Left ventricle myocardium inferior (tissue), 1 donor: ENCODE measurements at regions of chr4 and their contacts with region 1.

Region 1: GRCh38 chr4:185039508-185040273 is 21.4 kb downstream of the HELT start:
- DNase-seq: no peak
- H3K4me3 ChIP-seq: peak overlapping the region; percentile 2
- H3K27ac ChIP-seq: no peak overlapping the region
- H3K4me1 ChIP-seq: peaks cover 5% of the 10 kb centered on the region
- H3K27me3 ChIP-seq: peaks cover 11% of the 10 kb centered on the region
- CTCF ChIP-seq: peak; percentile 85

Region 2: DNA sequence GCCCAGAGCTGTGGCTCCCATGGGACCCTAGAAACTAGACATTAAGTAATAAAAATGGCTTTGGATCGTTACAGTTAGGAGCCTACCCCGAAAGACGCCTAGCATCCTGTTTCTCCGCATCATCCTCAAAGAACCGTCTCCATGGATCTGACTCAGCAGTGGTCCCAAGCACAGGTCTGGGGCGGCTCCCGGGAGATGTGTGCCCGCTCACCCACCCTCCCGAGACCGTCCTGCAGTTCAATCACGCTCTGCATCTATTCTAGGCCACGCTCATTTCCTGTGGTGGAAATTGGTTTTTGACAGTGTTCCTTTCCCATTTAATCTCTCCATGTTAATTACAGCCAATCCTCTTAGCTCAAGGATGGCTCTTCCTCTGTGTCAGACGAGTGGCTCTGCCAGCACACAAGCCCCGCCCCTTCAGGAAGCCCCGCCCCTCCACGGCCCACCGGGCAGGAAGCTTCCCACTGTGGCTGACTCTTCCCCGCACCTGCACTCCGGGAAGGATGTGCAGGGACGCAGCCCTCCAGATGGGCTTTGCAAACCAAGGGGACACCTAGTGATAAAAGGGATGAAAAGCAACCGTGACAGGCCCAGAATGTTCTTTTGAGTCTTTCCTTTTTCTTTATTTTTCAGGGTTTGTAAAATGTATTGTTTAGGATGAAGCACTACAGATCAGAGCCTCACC is 55.9 kb before region 1 on chr4:
- intact Hi-C with region 1: no loop called
- DNase-seq: peak; percentile 67
- H3K4me3 ChIP-seq: no peak overlapping the region
- H3K27ac ChIP-seq: peak overlapping the region; percentile 10
- H3K4me1 ChIP-seq: peaks cover 22% of the 10 kb centered on the region
- H3K27me3 ChIP-seq: no peaks in the 10 kb centered on the region
- CTCF ChIP-seq: peak; percentile 63

Region 3: GRCh38 chr4:185093589-185093988 is 53.9 kb after region 1 on chr4:
- intact Hi-C with region 1: loop called (anchors 5 kb)
- DNase-seq: no peak
- H3K4me3 ChIP-seq: no peak overlapping the region
- H3K27ac ChIP-seq: no peak overlapping the region
- H3K4me1 ChIP-seq: no peaks in the 10 kb centered on the region
- H3K27me3 ChIP-seq: no peaks in the 10 kb centered on the region
- CTCF ChIP-seq: no peak

Region 4: GRCh38 chr4:185115827-185116232 is 76.1 kb after region 1 on chr4:
- intact Hi-C with region 1: no loop called
- DNase-seq: peak; percentile 69
- H3K4me3 ChIP-seq: peak overlapping the region; percentile 12
- H3K27ac ChIP-seq: peak overlapping the region; percentile 85
- H3K4me1 ChIP-seq: peaks cover 78% of the 10 kb centered on the region
- H3K27me3 ChIP-seq: no peaks in the 10 kb centered on the region
- CTCF ChIP-seq: no peak

Region 5: GRCh38 chr4:185134307-185134869 is 94.7 kb after region 1 on chr4:
- intact Hi-C with region 1: loop called (anchors 5 kb)
- DNase-seq: no peak
- H3K4me3 ChIP-seq: no peak overlapping the region
- H3K27ac ChIP-seq: peak overlapping the region; percentile 31
- H3K4me1 ChIP-seq: peaks cover 27% of the 10 kb centered on the region
- H3K27me3 ChIP-seq: no peaks in the 10 kb centered on the region
- CTCF ChIP-seq: peak; percentile 80